Posterior vena cava (tissue), 2 donors: ENCODE measurements at regions of chr5 and their contacts with region 1.

Region 1: GRCh38 chr5:170534177-170534576 is 30.4 kb downstream of the KCNIP1 start:
- DNase-seq: no peak

Region 2: DNA sequence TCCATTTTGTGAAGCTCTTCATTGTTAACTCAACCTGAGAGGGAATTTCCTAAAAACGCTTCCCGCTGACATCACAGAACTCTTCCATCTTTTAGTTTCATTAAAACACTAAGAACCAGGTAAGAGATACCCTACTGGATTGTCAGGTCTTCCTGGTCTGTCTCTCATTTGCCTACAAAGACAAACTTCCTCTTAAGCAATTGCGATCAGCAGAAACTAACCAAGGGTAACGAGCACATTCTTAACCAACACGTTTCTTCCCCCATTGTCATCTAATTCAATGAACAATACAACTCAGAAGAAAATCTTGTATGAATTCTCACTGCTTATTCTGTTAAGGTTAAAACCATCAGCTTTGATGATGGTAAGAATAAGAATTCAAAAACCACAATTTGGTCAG is 1465.7 kb after region 1 on chr5:
- intact Hi-C with region 1: loop called in 1 of 2 experiments (anchors 10 kb)
- DNase-seq: no peak